ENCODE measurements at regions of chr15 and their contacts with region 1.

Region 1: DNA sequence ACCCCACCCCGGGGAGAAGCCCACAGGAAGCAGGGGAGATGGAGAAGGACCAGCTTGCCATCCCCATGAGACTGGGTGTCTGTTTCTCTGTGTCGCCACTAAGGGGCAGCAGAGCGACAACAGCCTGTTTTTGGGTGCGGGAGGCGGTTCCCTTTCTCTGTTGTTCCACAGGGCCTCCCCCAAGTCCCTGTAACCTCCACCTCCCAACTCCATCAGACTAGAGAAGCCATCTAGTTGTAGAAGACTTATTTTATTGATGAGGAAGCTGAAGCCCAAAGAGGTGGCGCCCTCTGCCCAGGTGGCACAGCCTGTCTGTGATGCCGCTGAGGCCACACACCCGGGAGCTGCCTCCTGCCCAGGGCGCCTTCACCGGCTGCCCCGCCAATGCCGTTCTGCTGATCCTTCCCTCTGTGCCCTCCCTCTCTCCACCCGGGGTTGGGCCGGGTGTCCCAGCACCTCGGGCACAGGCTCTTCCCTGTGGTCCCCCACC is 3.9 kb upstream of the CCDC9B start:
- DNase-seq: peak; percentile 84
- H3K4me3 Mint-ChIP-seq: no peak overlapping the region
- H3K27ac Mint-ChIP-seq: no peak overlapping the region
- H3K4me1 Mint-ChIP-seq: no peaks in the 10 kb centered on the region
- H3K27me3 Mint-ChIP-seq: peaks cover 4% of the 10 kb centered on the region

Region 2: DNA sequence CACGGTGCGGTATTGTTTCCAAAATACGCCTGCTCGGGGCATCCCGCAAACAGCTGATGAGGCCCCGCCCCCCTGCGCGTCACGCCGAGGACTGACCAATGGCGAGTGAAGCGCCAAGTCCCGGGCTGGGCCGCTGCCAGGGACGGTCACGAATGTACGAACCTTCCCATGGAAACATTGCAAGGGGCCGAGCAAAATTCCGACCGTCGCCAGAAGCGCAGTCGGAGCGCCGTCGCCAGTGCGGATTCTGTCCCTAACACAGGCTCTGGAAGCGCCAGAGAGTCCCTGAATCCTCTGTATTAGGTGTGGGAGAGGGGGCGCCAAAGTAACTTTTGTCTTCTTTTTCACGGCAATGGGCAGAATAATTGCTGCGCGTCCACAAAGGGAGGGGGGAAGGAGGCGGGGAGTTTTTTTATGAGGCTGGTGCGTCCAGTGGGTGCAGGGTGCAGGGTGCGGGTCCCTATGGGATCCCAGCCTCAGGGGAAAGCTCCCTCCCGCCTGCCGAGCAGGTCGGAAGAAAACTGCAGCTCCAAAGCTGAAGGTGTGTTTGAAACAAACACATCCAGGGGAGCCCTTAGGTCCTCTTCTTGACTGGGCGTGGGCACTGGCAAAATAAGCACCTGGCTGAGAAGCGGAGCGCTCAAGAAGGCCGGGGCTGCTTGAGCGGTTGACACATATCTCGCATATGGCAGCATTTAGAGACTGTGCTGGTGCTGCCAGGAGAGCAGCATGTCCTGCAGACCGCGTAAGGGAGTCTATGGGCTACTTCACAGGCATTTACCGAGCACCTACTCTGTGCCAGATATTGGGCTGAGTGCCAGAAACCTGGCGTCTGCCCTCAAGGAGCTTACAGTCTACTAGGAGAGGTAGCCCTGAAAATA is 235.6 kb before region 1 on chr15 and contains the start of gene BMF:
- CTCF ChIA-PET with region 1: no interaction called
- DNase-seq: peak; percentile 99
- H3K4me3 Mint-ChIP-seq: peak within 1 kb of the TSS; percentile 90
- H3K27ac Mint-ChIP-seq: peak within 1 kb of the TSS; percentile 84
- H3K4me1 Mint-ChIP-seq: peaks cover 53% of the 10 kb centered on the region
- H3K27me3 Mint-ChIP-seq: peaks cover 64% of the 10 kb centered on the region

Region 3: DNA sequence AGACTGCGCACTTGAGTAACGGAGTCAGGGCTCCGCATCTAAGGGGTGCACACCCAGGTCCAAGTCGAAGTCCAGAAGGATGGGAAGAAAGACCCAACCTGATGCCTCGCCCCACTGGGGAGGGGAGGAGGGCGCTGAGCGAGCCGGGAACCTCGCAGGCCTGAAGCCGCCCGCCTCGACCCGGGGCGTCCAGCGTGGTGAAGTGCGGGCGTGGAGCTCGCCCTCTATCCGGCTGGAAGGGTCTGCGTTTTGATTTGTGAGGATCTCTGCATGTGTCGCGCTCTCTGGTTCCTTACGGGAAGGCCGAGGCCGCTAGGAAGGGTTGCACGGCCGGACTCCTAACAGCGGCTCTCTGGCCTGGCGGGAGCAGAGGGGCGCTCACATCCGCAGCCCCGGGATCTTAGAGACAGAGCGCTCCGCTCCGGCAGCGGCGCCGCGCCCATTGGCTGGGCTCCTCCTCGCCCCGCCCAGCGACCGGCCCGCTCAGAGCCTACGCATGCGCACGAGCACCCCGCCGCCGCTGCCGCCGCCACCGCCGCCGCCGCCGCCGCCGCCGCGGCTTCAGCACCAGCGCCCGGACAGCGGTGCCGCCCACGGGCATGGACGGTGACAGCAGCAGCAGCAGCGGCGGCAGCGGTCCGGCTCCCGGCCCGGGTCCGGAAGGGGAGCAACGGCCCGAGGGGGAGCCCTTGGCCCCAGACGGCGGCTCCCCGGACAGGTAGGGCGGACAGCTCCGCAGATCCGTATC is 13.2 kb after region 1 on chr15 and contains the start of gene DISP2:
- CTCF ChIA-PET with region 1: interaction called, 33 read pairs
- DNase-seq: peak; percentile 91
- H3K4me3 Mint-ChIP-seq: peak within 1 kb of the TSS; percentile 75
- H3K27ac Mint-ChIP-seq: no peak within 1 kb of the TSS
- H3K4me1 Mint-ChIP-seq: peaks cover 10% of the 10 kb centered on the region
- H3K27me3 Mint-ChIP-seq: peaks cover 61% of the 10 kb centered on the region

Region 4: GRCh38 chr15:40407330-40407990 is 62.8 kb after region 1 on chr15:
- CTCF ChIA-PET with region 1: interaction called, 13 read pairs
- DNase-seq: no peak
- H3K4me3 Mint-ChIP-seq: no peak overlapping the region
- H3K27ac Mint-ChIP-seq: peak overlapping the region; percentile 38
- H3K4me1 Mint-ChIP-seq: peaks cover 52% of the 10 kb centered on the region
- H3K27me3 Mint-ChIP-seq: no peaks in the 10 kb centered on the region